Posterior cingulate gyrus (tissue), 11 donors: ENCODE measurements at regions of chr19 and their contacts with region 1.

Region 1: GRCh38 chr19:3360421-3361383 is 5.7 kb upstream of the NFIC start:
- DNase-seq: peak in 9 of 10 donors; percentile 72 to 96 (median 81)

Region 2: GRCh38 chr19:3319643-3320353 is 40.9 kb before region 1 on chr19:
- intact Hi-C with region 1: no loop called
- DNase-seq: peak in 2 of 10 donors; percentile 42 to 46

Region 3: GRCh38 chr19:3403489-3404323 is 43.0 kb after region 1 on chr19:
- intact Hi-C with region 1: loop called (anchors 5 kb)
- DNase-seq: peak; percentile 66 to 96 (median 77)